Heart left ventricle (tissue), 16 donors: ENCODE measurements at regions of chr5 and their contacts with region 1.

Region 1: GRCh38 chr5:176675675-176676360 is 28.5 kb downstream of the TSPAN17 start:
- DNase-seq: peak in 2 of 5 donors; percentile 28 to 44
- ATAC-seq: no peak
- H3K4me3 ChIP-seq: no peak overlapping the region
- H3K27ac ChIP-seq: no peak overlapping the region
- H3K4me1 ChIP-seq: peaks cover 0 to 30% (median 15%) of the 10 kb centered on the region in 12 donors
- H3K27me3 ChIP-seq: peaks cover 0 to 35% (median 20%) of the 10 kb centered on the region in 9 donors
- CTCF ChIP-seq: peak in 8 of 12 donors; percentile 11 to 55 (median 24)
- POLR2A ChIP-seq: no peak

Region 2: GRCh38 chr5:176629853-176630712 is 45.7 kb before region 1 on chr5 and contains the starts of genes EIF4E1B and SNCB:
- intact Hi-C with region 1: no loop called
- DNase-seq: peak in 2 of 5 donors; percentile 43 to 72
- ATAC-seq: peak in 3 of 4 donors; percentile 78 to 91 (median 81)
- H3K4me3 ChIP-seq: peak within 1 kb of the TSS; percentile 17 to 51 (median 40)
- H3K27ac ChIP-seq: no peak within 1 kb of the TSS
- H3K4me1 ChIP-seq: peaks cover 0 to 18% (median 10%) of the 10 kb centered on the region in 12 donors
- H3K27me3 ChIP-seq: peaks cover 26 to 93% (median 61%) of the 10 kb centered on the region in 9 donors
- CTCF ChIP-seq: peak in 3 of 12 donors; percentile 6 to 20 (median 15)
- POLR2A ChIP-seq: no peak
- total RNA-seq, gene EIF4E1B: not detected
- total RNA-seq, gene SNCB: 0.23 TPM in 1 of 9 donors, not detected in the others

Region 3: DNA sequence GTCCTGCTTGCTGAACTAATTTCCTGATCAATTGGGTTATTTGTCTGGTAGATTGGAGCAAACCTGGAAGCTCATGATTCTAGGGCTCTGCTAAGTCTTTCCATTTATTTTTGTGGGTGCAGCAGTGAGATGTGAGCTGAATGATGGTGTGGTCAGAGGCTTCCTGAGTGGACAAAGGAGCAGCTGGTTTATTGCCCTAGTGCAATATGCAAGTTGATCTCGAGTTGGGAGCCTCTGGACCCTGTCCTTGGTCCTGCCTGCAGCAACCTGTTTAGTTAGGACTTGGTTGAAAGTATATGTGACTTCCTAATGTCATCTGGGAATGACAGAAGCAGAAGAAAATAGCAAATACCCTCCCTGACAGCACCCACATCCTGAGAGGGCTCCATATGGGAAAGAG is 130.3 kb after region 1 on chr5:
- intact Hi-C with region 1: loop called in 1 of 10 experiments (anchors 5 kb)
- DNase-seq: no peak
- ATAC-seq: no peak
- H3K4me3 ChIP-seq: no peak overlapping the region
- H3K27ac ChIP-seq: no peak overlapping the region
- H3K4me1 ChIP-seq: peaks cover 0 to 18% (median 8%) of the 10 kb centered on the region in 12 donors
- H3K27me3 ChIP-seq: peaks cover 13 to 67% (median 36%) of the 10 kb centered on the region in 9 donors
- CTCF ChIP-seq: no peak
- POLR2A ChIP-seq: no peak

Region 4: DNA sequence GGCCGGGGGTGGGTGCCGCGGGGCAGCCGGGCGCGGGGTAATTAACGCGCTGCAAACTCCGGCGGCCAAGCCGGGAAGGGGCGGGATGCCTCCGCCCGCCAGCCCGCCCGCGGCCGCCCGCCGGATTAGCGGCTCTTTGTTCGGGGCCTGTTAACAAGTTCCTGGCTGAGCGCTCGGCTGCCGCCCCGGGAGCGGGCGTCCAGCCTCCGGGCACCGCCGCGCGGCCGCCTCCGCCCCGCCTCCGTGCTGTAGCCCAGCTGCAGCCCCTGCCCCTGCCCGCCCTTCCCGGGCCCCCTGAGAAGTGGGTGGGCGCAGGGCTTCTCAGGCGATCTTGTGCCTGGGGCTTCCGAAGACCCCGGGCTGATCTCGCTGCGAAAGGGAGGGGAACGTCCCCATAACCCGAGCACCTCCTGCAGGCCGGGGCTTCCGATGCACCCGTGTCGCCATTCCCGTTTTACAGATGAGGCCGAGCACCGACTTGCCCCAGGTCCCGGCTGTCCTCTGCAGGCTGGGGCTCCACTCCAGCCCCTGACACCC is 142.1 kb after region 1 on chr5:
- intact Hi-C with region 1: loop called in 1 of 10 experiments (anchors 5 kb)
- DNase-seq: peak in 1 of 5 donors; percentile 22
- ATAC-seq: peak in 1 of 4 donors; percentile 34
- H3K4me3 ChIP-seq: peak overlapping the region in 11 of 12 donors; percentile 10 to 51 (median 40)
- H3K27ac ChIP-seq: no peak overlapping the region
- H3K4me1 ChIP-seq: peaks cover 0 to 15% (median 3%) of the 10 kb centered on the region in 12 donors
- H3K27me3 ChIP-seq: peaks cover 29 to 79% (median 45%) of the 10 kb centered on the region in 9 donors
- CTCF ChIP-seq: peak in 3 of 12 donors; percentile 18 to 21 (median 20)
- POLR2A ChIP-seq: no peak

Region 5: GRCh38 chr5:176959051-176959450 is 283.2 kb after region 1 on chr5:
- intact Hi-C with region 1: loop called in 1 of 10 experiments (anchors 5 kb)
- DNase-seq: no peak
- ATAC-seq: no peak
- H3K4me3 ChIP-seq: no peak overlapping the region
- H3K27ac ChIP-seq: no peak overlapping the region
- H3K4me1 ChIP-seq: peaks cover 0 to 11% (median 2%) of the 10 kb centered on the region in 12 donors
- H3K27me3 ChIP-seq: no peaks in the 10 kb centered on the region
- CTCF ChIP-seq: peak; percentile 30 to 56 (median 46)
- POLR2A ChIP-seq: no peak